AG04450 (cell line): ENCODE measurements at regions of chr5 and their contacts with region 1.

Region 1: GRCh38 chr5:140647042-140647341 is 438 bp downstream of the NDUFA2 start:
- DNase-seq: no peak
- H3K4me3 ChIP-seq: peak overlapping the region; percentile 93
- H3K27ac ChIP-seq: no peak overlapping the region
- H3K27me3 ChIP-seq: no peaks in the 10 kb centered on the region
- CTCF ChIP-seq: no peak

Region 2: DNA sequence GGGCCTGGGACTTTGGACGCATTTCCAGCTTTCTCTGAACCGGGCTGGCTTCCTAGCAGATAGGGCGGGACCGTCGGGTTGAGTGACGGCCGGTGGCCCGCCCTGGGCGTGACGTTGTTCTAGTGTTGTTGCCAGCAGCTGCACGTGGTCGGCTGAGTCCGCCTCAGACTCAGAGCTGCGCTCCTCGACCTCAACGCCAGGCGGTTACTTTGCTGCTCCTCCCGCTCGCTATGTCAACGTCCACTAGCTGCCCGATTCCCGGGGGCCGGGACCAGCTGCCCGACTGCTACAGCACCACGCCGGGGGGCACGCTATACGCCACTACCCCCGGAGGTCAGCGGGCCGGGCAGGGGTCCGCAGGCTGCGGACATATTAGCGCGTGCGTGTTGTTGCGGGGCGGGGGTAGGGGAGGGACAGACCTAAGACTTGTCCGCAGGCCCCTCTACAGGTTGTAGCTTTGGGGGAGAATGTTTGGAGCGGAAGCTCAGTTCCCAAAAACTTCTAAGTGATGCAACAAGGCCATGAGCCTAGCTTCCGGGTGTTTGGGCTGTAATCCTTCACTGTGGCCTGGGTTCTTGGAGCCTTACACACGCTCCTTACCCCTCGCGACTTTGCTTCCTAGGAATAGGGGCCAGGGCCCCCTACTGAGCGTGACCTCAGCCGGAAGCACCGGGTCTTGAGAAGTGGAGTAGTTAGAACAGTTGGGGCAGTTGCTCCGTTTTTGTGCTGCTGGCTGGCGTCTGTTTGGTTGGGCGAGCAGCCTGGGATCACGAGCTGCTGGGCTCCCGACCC is 99.3 kb before region 1 on chr5 and contains the start of gene EIF4EBP3:
- CTCF ChIA-PET with region 1: interaction called, 12 read pairs
- POLR2A ChIA-PET with region 1: interaction called, 25 read pairs
- DNase-seq: peak; percentile 90
- H3K4me3 ChIP-seq: peak within 1 kb of the TSS; percentile 49
- H3K27ac ChIP-seq: peak within 1 kb of the TSS; percentile 93
- H3K27me3 ChIP-seq: no peaks in the 10 kb centered on the region
- CTCF ChIP-seq: peak; percentile 63
- polyA plus RNA-seq, gene EIF4EBP3: 1.7 and 2.8 TPM in 2 replicates

Region 3: DNA sequence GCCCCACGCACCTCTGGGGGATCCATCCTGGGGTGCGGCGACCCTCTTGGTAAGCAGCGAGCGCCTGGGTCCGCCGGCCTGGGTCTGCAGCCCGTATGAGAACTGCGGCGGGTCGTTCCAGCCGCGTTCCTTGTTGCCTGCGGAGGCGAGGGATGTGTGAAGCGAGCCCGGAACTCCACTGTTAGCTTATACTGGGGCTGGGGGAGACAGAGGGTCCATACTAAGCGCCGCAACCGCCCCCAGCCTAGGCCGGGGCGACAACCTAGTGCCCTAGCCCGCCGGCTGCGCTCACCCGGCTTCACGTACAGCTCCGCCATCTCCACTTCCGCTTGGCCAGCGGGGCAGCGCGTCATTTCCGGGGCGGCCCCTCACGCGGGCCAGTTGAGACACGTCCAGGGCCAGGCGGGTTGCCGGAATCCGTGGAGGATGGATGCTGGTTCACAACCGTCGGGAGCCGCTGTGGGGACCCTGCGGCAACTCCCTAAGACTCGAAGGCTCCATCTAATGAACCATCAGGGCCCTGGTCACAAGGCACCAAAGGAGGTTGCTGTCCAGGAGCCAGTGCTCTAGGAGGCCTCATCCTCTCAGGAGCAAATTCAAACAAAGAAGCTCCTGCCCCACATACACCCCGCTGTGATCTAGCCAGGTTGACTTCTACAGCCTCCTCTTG is 89.7 kb before region 1 on chr5 and contains the start of gene SRA1:
- CTCF ChIA-PET with region 1: no interaction called
- POLR2A ChIA-PET with region 1: interaction called, 13 read pairs
- DNase-seq: peak; percentile 65
- H3K4me3 ChIP-seq: peak within 1 kb of the TSS; percentile 83
- H3K27ac ChIP-seq: peak within 1 kb of the TSS; percentile 92
- H3K27me3 ChIP-seq: no peaks in the 10 kb centered on the region
- CTCF ChIP-seq: no peak
- polyA plus RNA-seq, gene SRA1: 52.3 and 52.8 TPM in 2 replicates

Region 4: DNA sequence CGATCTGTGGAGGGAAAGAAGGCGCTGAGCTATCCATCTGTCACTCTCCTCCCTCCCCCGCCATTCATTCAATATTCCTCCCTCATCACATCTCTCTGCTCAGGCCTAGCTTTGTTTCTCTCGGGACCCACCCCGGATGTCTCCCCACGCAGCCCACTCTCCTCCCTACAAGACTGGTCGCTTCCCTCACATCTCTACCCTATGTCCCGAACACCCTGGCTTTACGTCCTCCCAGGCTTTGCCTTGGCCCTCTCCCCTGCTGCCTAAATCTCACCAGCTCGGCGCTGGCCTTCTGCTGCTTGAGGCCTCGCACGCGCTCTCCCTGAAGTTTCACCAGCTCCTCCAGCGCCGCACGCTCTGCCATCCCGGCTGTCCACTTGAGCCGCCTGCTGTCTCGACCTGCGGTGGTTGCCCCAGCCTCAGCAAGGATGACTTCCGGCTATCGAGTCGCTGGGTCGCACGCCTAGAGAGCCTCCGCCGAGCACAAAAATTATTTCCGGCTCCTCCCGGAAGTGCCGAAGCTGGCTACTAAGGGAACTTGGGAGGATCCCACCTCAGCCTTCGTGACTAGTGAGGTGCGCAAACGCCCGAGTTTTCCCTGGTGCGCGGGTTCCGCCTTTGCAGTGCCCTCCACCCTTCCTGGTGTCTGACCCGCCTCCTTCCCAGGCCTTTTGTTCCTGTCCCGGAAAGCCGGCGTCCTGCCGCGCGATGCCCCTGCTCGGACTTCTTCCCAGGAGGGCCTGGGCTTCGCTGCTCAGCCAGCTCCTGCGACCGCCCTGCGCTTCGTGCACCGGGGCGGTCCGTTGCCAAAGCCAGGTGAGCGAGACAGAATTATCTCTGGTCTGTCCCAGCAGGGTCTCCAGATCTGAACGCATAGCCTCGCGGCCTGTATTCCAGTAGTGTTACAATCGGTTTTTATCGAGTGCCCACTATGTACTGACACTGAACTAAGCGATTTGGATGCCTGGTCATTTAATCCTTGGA is 44.2 kb after region 1 on chr5 and contains the starts of genes HARS1 and HARS2:
- CTCF ChIA-PET with region 1: no interaction called
- POLR2A ChIA-PET with region 1: interaction called, 11 read pairs
- DNase-seq: peak; percentile 86
- H3K4me3 ChIP-seq: peak within 1 kb of the TSS; percentile 99
- H3K27ac ChIP-seq: peak within 1 kb of the TSS; percentile 77
- H3K27me3 ChIP-seq: no peaks in the 10 kb centered on the region
- CTCF ChIP-seq: no peak
- polyA plus RNA-seq, gene HARS1: 93.6 and 98.8 TPM in 2 replicates
- polyA plus RNA-seq, gene HARS2: 39.9 and 48.6 TPM in 2 replicates

Region 5: GRCh38 chr5:140800816-140801493 is 154.0 kb after region 1 on chr5 and contains the start of gene PCDHA3:
- CTCF ChIA-PET with region 1: no interaction called
- POLR2A ChIA-PET with region 1: no interaction called
- DNase-seq: no peak
- H3K4me3 ChIP-seq: no peak within 1 kb of the TSS
- H3K27ac ChIP-seq: no peak within 1 kb of the TSS
- H3K27me3 ChIP-seq: no peaks in the 10 kb centered on the region
- CTCF ChIP-seq: no peak; the same call in 1 of the 2 replicates
- polyA plus RNA-seq, gene PCDHA3: 0.20 and 0.27 TPM in 2 replicates